Activated B cell treated with CpG ODN at 0.5 μM for 24 hours (primary cell): ENCODE measurements at regions of chr14 and their contacts with region 1.

Region 1: GRCh38 chr14:33271216-33271615 is 332.5 kb downstream of the NPAS3 start:
- DNase-seq: no peak
- ATAC-seq: no peak
- H3K4me3 Mint-ChIP-seq: no peak overlapping the region
- H3K27ac Mint-ChIP-seq: no peak overlapping the region
- H3K4me1 Mint-ChIP-seq: no peaks in the 10 kb centered on the region
- H3K27me3 Mint-ChIP-seq: no peaks in the 10 kb centered on the region
- CTCF ChIP-seq: no peak

Region 2: DNA sequence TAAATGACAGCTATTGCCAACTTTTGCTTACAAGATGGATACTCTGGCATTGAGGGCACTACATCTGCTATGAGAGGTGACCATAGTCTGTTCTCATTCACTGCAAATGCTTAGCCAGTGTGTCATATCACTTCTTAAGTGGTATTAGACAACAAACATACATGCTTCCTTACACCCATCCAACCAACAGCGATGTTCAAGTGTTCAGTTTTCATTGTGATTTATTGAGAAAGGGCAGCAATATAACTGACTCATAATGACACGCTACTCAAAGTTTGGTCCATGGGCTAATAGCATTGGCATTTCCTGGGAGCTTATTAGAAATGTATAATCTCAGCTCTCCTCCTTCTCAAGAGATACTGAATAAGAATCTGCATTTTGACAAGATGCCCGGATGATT is 150.9 kb before region 1 on chr14:
- CTCF ChIA-PET with region 1: no interaction called
- POLR2A ChIA-PET with region 1: no interaction called
- intact Hi-C with region 1: loop called (anchors 10 kb)
- DNase-seq: no peak
- ATAC-seq: no peak
- H3K4me3 Mint-ChIP-seq: no peak overlapping the region
- H3K27ac Mint-ChIP-seq: no peak overlapping the region
- H3K4me1 Mint-ChIP-seq: no peaks in the 10 kb centered on the region
- H3K27me3 Mint-ChIP-seq: no peaks in the 10 kb centered on the region
- CTCF ChIP-seq: no peak

Region 3: DNA sequence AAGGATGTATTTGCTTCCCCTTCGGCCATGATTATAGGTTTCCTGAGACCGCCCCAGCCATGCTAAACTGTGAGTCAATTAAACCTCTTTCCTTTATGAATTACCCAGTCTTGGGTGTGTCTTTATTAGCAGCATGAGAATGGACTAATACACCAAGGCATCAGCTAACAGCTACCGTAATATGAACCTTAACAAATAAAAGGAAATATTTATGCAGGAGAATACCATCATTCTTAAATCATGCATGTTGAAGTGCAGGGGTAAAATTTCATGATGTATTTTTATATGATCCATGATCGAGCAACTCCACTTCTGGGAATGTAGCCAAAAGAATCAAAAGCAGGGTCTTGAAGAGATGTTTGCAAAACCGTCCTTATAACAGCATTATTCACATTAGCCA is 46.5 kb after region 1 on chr14:
- CTCF ChIA-PET with region 1: no interaction called
- POLR2A ChIA-PET with region 1: no interaction called
- intact Hi-C with region 1: no loop called
- DNase-seq: no peak
- ATAC-seq: no peak
- H3K4me3 Mint-ChIP-seq: no peak overlapping the region
- H3K27ac Mint-ChIP-seq: no peak overlapping the region
- H3K4me1 Mint-ChIP-seq: no peaks in the 10 kb centered on the region
- H3K27me3 Mint-ChIP-seq: no peaks in the 10 kb centered on the region
- CTCF ChIP-seq: no peak